ENCODE measurements at regions of chr4 and their contacts with region 1.

Region 1: DNA sequence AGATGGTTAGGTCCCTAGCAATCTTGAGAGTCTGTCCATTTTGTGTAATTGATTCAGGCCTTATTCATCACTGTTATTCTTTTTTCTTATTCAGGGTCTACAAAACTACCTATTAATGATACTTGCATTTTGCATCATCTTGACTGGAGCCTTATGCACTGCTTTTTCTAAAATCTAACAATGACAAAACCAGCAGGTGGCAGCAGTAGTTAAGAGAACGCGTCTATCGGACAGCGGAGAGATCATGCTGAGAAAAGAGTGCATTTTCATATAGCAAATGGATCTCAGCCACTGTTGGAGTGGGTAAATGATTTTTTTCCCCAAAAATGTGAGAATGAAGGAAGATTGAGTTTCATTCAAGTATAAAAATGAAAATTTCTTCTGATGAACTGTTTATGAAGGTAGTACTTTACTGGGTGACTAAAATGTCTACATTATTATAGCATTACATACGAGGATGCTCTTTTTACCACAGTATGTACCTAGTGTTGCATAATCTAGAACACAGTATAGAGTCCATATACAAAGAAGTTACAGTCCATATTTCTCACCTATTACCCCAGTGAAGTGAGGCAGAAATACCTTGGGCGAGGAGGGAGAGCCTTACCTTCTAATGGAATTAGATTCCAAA is 43.2 kb downstream of the TMEM144 start:
- DNase-seq: no peak
- H3K4me3 ChIP-seq: no peak overlapping the region
- H3K27ac ChIP-seq: no peak overlapping the region
- H3K4me1 ChIP-seq: no peaks in the 10 kb centered on the region
- H3K27me3 ChIP-seq: no peaks in the 10 kb centered on the region
- CTCF ChIP-seq: peak; percentile 20 to 75 (median 56)
- POLR2A ChIP-seq: no peak

Region 2: GRCh38 chr4:157992038-157992705 is 261.3 kb before region 1 on chr4:
- intact Hi-C with region 1: loop called (anchors 5 kb)
- DNase-seq: no peak
- H3K4me3 ChIP-seq: peak overlapping the region; percentile 27 to 41
- H3K27ac ChIP-seq: peak overlapping the region; percentile 40
- H3K4me1 ChIP-seq: peaks cover 14% of the 10 kb centered on the region
- H3K27me3 ChIP-seq: no peaks in the 10 kb centered on the region
- CTCF ChIP-seq: peak; percentile 54 to 75 (median 64)
- POLR2A ChIP-seq: no peak

Region 3: GRCh38 chr4:158193171-158193749 is 60.2 kb before region 1 on chr4:
- intact Hi-C with region 1: loop called (anchors 10 kb)
- DNase-seq: no peak
- H3K4me3 ChIP-seq: no peak overlapping the region
- H3K27ac ChIP-seq: no peak overlapping the region
- H3K4me1 ChIP-seq: peaks cover 7% of the 10 kb centered on the region
- H3K27me3 ChIP-seq: no peaks in the 10 kb centered on the region
- CTCF ChIP-seq: peak in 2 of 3 experiments; percentile 16 to 24
- POLR2A ChIP-seq: no peak